B cell (primary cell): ENCODE measurements at regions of chr7 and their contacts with region 1.

Region 1: DNA sequence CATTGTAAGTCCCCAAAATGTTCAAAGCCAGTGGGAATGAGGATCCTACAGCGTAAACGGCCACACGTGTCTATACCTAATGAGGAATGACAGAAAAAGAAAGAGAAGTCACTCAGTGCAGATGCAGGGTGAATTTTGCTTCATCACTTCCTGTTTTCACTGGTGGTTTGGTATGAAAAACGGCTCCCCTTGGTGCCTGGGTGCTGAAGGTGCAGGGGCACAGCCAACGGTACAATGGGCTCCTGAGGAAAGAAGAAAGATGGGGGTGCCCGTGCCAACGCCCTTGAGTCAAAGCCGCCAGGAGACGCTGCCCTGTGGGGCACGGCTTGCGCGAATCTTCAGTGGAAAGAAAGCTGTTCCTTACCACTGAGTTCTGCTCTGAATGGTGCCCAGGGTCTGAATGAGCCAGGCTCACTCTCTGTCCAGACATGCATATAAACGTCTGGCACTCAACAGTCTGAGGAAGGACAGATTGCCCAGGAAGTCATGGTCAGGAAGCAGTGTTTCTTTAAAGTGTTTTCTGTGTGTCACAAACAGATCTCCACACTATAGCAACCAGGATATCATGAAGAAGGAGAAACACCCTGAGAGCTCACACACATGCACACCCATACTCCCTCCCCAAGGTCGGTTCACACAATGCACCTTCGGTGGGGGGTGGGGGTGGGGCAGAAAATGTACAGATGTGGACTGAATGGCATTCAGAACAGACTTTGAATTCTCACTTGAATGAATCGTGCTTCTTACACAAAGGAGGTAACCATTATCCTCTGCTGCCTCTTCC is 105.8 kb downstream of the ELMO1 start:
- DNase-seq: peak; percentile 86
- ATAC-seq: peak; percentile 88
- H3K4me3 ChIP-seq: peak overlapping the region; percentile 52 to 82 (median 70)
- H3K4me3 Mint-ChIP-seq: peak overlapping the region; percentile 99
- H3K27ac ChIP-seq: peak overlapping the region; percentile 71 to 75
- H3K27ac Mint-ChIP-seq: peak overlapping the region; percentile 98
- H3K4me1 ChIP-seq: peaks cover 47 to 57% of the 10 kb centered on the region in 2 donors
- H3K4me1 Mint-ChIP-seq: peaks cover 76% of the 10 kb centered on the region
- H3K27me3 ChIP-seq: no peaks in the 10 kb centered on the region
- H3K27me3 Mint-ChIP-seq: no peaks in the 10 kb centered on the region
- CTCF ChIP-seq: peak; percentile 60

Region 2: GRCh38 chr7:37234928-37235327 is 108.0 kb before region 1 on chr7:
- CTCF ChIA-PET with region 1: interaction called, 186 read pairs
- POLR2A ChIA-PET with region 1: no interaction called
- intact Hi-C with region 1: no loop called
- DNase-seq: peak; percentile 58
- ATAC-seq: peak; percentile 24
- H3K4me3 ChIP-seq: no peak overlapping the region
- H3K4me3 Mint-ChIP-seq: no peak overlapping the region
- H3K27ac ChIP-seq: no peak overlapping the region
- H3K27ac Mint-ChIP-seq: no peak overlapping the region
- H3K4me1 ChIP-seq: no peaks in the 10 kb centered on the region
- H3K4me1 Mint-ChIP-seq: peaks cover 2% of the 10 kb centered on the region
- H3K27me3 ChIP-seq: no peaks in the 10 kb centered on the region
- H3K27me3 Mint-ChIP-seq: no peaks in the 10 kb centered on the region
- CTCF ChIP-seq: peak; percentile 81

Region 3: GRCh38 chr7:37290731-37291130 is 52.1 kb before region 1 on chr7:
- CTCF ChIA-PET with region 1: interaction called, 208 read pairs
- POLR2A ChIA-PET with region 1: interaction called, 10 read pairs
- intact Hi-C with region 1: no loop called
- DNase-seq: no peak
- ATAC-seq: no peak
- H3K4me3 ChIP-seq: no peak overlapping the region
- H3K4me3 Mint-ChIP-seq: no peak overlapping the region
- H3K27ac ChIP-seq: peak overlapping the region in 1 of 2 donors; percentile 39
- H3K27ac Mint-ChIP-seq: peak overlapping the region; percentile 11
- H3K4me1 ChIP-seq: peaks cover 16 to 25% of the 10 kb centered on the region in 2 donors
- H3K4me1 Mint-ChIP-seq: peaks cover 40% of the 10 kb centered on the region
- H3K27me3 ChIP-seq: no peaks in the 10 kb centered on the region
- H3K27me3 Mint-ChIP-seq: no peaks in the 10 kb centered on the region
- CTCF ChIP-seq: no peak